Activated naive CD4-positive, alpha-beta T cell treated with anti-CD3 and anti-CD28 coated beads for 36 hours (primary cell): ENCODE measurements at regions of chr19 and their contacts with region 1.

Region 1: DNA sequence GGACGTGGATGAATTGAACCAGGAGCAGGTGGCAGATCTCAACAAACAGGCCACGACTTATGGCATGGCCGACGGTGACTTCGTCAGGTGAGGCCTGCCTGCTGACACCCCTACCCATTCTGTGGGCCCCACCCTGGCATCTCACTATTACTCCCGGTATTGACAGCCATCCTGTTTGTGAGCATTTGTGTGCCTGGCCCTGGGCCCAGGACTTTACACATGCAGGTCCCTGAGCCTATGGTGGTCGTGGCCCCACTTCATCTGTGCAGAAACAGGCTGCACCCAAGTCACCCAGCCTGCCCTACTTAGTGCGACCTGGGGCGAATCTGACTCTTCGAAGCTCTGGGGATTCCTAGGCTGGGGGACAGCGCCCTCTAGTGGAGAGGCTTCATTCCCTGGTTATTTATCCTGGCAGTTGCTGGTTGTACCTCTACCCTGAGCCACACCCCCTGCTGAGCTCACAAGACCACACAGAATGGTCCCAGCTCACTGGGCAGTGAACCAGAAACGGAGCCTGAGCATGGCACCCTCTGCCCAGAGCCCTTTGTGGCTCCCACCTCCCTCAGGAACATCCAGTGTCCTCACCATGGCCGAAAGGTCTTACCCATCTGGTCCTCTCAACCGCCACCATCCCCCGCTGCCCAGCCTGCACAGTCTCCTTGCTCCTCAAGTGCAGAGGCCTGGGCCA is 16.9 kb downstream of the ZNF296 start:
- DNase-seq: peak; percentile 90
- H3K4me3 Mint-ChIP-seq: no peak overlapping the region
- H3K27ac Mint-ChIP-seq: peak overlapping the region; percentile 32
- H3K4me1 Mint-ChIP-seq: no peaks in the 10 kb centered on the region
- H3K27me3 Mint-ChIP-seq: no peaks in the 10 kb centered on the region

Region 2: GRCh38 chr19:44988896-44989556 is 70.4 kb before region 1 on chr19:
- CTCF ChIA-PET with region 1: interaction called, 11 read pairs
- intact Hi-C with region 1: loop called (anchors 1 kb)
- DNase-seq: peak; percentile 77
- H3K4me3 Mint-ChIP-seq: no peak overlapping the region
- H3K27ac Mint-ChIP-seq: no peak overlapping the region
- H3K4me1 Mint-ChIP-seq: no peaks in the 10 kb centered on the region
- H3K27me3 Mint-ChIP-seq: no peaks in the 10 kb centered on the region

Region 3: DNA sequence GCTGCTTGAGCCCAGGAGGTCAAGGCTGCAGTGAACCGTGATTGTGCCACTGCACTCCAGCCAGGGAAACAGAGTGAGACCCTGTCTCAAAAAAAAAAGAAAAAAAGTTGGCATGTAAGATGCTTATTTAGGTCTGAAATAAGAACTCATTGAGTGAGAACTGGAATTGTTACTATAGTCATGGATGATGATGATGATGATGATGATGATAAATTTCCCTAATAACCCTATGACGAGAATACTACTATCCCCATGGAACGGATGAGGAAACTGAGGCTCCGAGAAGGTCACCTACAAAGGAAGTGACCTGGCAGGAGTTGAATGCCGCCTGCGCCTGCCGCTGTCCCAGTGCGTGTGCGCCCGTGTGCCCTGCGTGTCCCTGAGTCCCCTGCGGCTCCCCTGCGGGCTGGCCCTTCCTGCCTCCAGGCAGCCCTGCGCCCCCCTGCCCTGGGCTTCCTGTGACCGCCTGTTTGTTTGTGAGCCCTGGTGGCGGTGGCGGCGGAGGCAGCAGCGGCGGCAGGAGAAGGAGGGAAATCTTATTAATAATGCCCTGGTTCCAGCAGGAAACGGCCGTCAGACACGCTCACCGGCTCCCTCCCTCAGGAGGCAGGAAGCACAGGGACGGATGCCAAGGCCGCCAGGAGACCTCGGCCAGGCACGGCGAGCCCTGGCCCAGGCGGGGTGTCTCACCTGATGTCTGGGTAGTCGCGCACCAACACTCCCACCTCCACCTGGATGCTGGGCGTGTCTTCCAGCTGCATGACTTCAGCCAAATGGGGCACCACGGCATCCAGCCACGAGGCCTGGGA is 156.2 kb after region 1 on chr19:
- CTCF ChIA-PET with region 1: no interaction called
- intact Hi-C with region 1: no loop called
- DNase-seq: no peak
- H3K4me3 Mint-ChIP-seq: no peak overlapping the region
- H3K27ac Mint-ChIP-seq: no peak overlapping the region
- H3K4me1 Mint-ChIP-seq: no peaks in the 10 kb centered on the region
- H3K27me3 Mint-ChIP-seq: peaks cover 51% of the 10 kb centered on the region

Region 4: DNA sequence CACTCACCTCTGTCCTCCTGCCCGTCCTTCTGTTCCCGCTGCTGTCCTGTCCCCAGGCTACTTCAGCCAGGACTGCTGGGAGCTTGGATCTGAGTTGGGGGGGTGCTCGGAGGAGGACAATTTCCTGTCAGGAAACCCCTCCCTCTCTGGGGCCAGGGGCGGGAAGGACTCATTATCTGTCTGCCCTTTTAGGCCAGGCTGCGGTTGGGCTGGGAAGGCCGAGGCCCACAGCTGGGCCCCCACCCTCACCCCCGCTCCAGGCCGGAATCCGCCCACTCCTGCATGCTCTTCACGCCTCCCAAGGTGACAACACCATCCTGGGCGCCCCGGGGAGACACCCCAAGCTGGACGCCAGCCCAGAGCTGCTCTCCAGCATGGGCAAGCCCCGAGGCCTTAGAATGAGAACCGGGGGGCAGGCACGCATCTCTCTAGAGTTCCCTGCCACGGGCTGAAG is 185.9 kb after region 1 on chr19 and contains the start of gene EXOC3L2:
- CTCF ChIA-PET with region 1: no interaction called
- intact Hi-C with region 1: loop called (anchors 5 kb)
- DNase-seq: no peak
- H3K4me3 Mint-ChIP-seq: no peak within 1 kb of the TSS
- H3K27ac Mint-ChIP-seq: no peak within 1 kb of the TSS
- H3K4me1 Mint-ChIP-seq: peaks cover 2% of the 10 kb centered on the region
- H3K27me3 Mint-ChIP-seq: peaks cover 10% of the 10 kb centered on the region
- total RNA-seq, gene EXOC3L2: not detected

Region 5: GRCh38 chr19:45376045-45376724 is 316.8 kb after region 1 on chr19:
- CTCF ChIA-PET with region 1: no interaction called
- intact Hi-C with region 1: no loop called
- DNase-seq: no peak
- H3K4me3 Mint-ChIP-seq: no peak overlapping the region
- H3K27ac Mint-ChIP-seq: no peak overlapping the region
- H3K4me1 Mint-ChIP-seq: no peaks in the 10 kb centered on the region
- H3K27me3 Mint-ChIP-seq: no peaks in the 10 kb centered on the region